ENCODE measurements at regions of chr5 and their contacts with region 1.

Region 1: DNA sequence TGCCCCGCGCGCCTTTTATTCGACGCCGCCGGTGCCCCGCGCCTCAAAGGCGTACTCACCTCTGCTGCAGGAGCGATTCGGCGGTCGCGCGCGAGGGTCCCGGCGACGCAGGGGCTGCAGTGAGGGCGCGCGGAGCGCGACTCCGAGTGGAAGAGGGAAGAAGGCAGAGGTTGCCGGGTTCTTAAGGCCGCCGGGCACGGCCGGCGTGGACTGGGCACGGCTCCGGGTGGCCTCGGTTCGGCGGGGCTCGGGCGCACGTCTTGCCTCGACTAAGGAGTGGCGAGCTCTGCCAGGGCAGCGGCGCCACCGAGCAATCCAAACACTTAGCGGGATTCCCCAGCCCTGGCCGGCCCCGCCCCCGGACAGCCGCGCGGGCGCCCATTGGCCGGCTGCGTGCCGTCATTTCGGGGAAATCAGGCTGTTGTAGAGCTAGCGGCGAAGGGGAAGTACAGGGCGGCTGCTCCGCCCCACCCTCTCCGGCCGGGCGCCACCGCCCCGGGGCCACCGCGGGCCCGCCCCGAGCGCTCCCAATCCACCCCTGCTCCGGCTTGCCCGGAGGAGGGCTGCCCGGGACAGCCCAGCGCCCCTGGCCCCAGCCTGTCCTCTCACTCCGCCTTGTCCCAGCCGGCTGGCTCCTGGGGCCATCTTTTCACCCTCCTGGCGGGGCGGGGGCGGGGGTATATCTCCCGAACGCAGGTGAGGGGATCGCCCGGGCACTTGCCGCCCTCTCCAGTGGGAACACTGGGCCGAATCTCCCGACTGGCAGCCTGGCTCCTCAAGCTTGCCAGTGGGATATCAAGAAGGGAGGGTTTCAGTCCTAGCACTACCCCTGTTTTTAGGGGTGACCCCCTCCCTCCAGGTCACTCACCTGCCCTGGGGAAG is at the start of gene IRF1:
- DNase-seq: peak; percentile 98
- ATAC-seq: peak; percentile 72 to 90 (median 81)
- H3K4me3 ChIP-seq: peak within 1 kb of the TSS; percentile 97
- H3K4me3 Mint-ChIP-seq: peak within 1 kb of the TSS; percentile 96
- H3K27ac ChIP-seq: peak within 1 kb of the TSS; percentile 99
- H3K27ac Mint-ChIP-seq: peak within 1 kb of the TSS; percentile 97 to 100
- H3K4me1 ChIP-seq: peaks cover 72% of the 10 kb centered on the region
- H3K4me1 Mint-ChIP-seq: peaks cover 72 to 81% of the 10 kb centered on the region in 2 donors
- H3K27me3 ChIP-seq: no peaks in the 10 kb centered on the region
- H3K27me3 Mint-ChIP-seq: no peaks in the 10 kb centered on the region
- CTCF ChIP-seq: no peak
- total RNA-seq, gene IRF1: 1,190 to 1,513 (median 1,282) TPM

Region 2: DNA sequence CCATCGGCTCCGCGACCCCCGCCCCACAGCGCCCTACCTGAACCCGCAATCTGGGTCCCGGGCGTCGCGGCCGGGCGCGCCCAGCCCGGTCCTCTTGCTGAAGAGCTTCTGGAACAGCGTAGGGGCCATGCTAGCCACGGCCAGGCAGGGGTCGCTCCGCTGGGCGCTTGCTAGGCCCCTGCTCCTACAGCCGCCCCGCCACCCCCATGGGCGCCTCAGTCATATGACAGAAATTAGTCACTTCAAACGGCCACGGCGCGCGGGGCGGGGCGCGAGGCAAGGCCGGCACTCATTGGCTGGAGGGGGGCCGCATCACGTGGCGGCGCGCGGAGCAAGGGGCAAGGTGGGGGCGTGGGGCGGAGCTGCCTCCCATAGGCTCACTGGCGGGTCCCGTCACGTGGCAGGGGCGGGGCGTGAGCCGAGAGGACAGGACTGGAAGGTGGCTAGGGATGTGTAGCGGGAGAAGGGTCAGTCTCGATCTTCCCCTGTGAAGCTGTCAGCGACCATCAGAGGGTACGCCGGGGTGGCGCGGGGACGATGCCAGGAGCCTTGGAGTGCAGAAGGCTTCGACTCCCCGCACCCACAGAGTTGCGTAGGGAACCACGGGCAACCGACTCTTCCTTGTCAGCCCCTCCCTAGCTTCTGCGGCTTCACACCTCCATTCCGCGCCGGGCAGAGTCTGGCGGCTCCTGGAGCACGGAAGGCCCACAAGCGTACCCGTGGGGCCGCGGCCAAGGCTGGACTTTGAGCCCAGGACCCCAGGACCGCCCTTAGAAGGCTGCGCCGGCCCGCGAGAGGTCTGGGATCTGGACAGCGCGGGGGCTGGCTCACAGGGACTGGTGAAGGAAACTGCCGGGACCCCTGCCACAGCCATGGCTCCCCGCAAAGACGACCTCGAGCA is 693.7 kb before region 1 on chr5 and contains the start of gene FNIP1:
- intact Hi-C with region 1: loop called (anchors 5 kb)
- DNase-seq: peak; percentile 97 to 99
- ATAC-seq: peak; percentile 91 to 99 (median 95)
- H3K4me3 ChIP-seq: peak within 1 kb of the TSS; percentile 72
- H3K4me3 Mint-ChIP-seq: peak within 1 kb of the TSS; percentile 93
- H3K27ac ChIP-seq: peak within 1 kb of the TSS; percentile 91
- H3K27ac Mint-ChIP-seq: peak within 1 kb of the TSS; percentile 86 to 94
- H3K4me1 ChIP-seq: peaks cover 6% of the 10 kb centered on the region
- H3K4me1 Mint-ChIP-seq: peaks cover 24 to 29% of the 10 kb centered on the region in 2 donors
- H3K27me3 ChIP-seq: no peaks in the 10 kb centered on the region
- H3K27me3 Mint-ChIP-seq: no peaks in the 10 kb centered on the region
- CTCF ChIP-seq: no peak
- total RNA-seq, gene FNIP1: 49.6 to 54.6 (median 50.8) TPM

Region 3: GRCh38 chr5:132419502-132420468 is 70.9 kb before region 1 on chr5:
- intact Hi-C with region 1: loop called (anchors 2 kb)
- DNase-seq: peak; percentile 66 to 84
- ATAC-seq: peak; percentile 53 to 79 (median 73)
- H3K4me3 ChIP-seq: no peak overlapping the region
- H3K4me3 Mint-ChIP-seq: peak overlapping the region; percentile 81
- H3K27ac ChIP-seq: peak overlapping the region; percentile 84
- H3K27ac Mint-ChIP-seq: peak overlapping the region; percentile 99 to 100
- H3K4me1 ChIP-seq: peaks cover 85% of the 10 kb centered on the region
- H3K4me1 Mint-ChIP-seq: peaks cover 94 to 95% of the 10 kb centered on the region in 2 donors
- H3K27me3 ChIP-seq: no peaks in the 10 kb centered on the region
- H3K27me3 Mint-ChIP-seq: no peaks in the 10 kb centered on the region
- CTCF ChIP-seq: peak; percentile 91

Region 4: GRCh38 chr5:132426525-132427138 is 64.1 kb before region 1 on chr5:
- intact Hi-C with region 1: loop called (anchors 2 kb)
- DNase-seq: peak; percentile 79
- ATAC-seq: peak; percentile 49 to 76 (median 59)
- H3K4me3 ChIP-seq: peak overlapping the region; percentile 32
- H3K4me3 Mint-ChIP-seq: peak overlapping the region; percentile 79
- H3K27ac ChIP-seq: peak overlapping the region; percentile 95
- H3K27ac Mint-ChIP-seq: peak overlapping the region; percentile 99 to 100
- H3K4me1 ChIP-seq: peaks cover 98% of the 10 kb centered on the region
- H3K4me1 Mint-ChIP-seq: peaks cover 95 to 97% of the 10 kb centered on the region in 2 donors
- H3K27me3 ChIP-seq: no peaks in the 10 kb centered on the region
- H3K27me3 Mint-ChIP-seq: no peaks in the 10 kb centered on the region
- CTCF ChIP-seq: peak; percentile 22

Region 5: DNA sequence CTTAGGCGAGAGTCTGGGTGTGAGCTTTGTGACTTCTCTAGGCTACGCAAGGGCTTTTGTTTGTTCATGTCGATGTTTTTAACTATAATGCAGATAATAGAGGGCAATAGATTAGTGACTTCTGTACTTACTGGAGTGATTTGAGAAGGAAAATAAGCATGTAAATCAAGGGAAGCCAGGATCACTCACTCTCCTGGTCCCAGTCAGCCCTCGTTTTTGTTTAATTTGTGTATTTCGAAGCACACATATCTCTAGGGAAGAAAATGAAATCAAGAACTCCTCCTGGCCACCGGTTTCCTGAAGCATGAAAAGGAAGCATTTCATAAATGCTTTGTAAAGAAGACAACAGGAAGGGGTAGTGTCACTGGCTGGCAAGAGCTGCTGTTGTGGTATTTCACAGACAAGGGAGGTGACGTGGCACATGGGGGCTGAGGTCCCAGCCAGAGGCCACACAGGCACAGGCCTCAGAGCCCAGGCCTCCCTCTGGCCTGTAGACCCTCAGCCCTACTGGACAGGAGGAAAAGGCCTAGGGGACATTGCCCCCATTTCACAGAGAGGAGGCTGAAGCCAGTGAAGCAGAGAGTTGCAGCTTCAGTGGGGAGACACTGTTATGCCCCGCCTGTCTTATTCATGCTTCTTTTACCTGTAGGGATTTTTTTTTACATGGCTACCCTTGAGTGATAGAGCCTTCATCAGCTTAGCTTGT is 34.3 kb before region 1 on chr5:
- intact Hi-C with region 1: loop called (anchors 1 kb)
- DNase-seq: peak; percentile 72 to 86
- ATAC-seq: peak; percentile 57 to 81 (median 71)
- H3K4me3 ChIP-seq: peak overlapping the region; percentile 12
- H3K4me3 Mint-ChIP-seq: peak overlapping the region; percentile 93
- H3K27ac ChIP-seq: peak overlapping the region; percentile 97
- H3K27ac Mint-ChIP-seq: peak overlapping the region; percentile 97 to 100
- H3K4me1 ChIP-seq: peaks cover 80% of the 10 kb centered on the region
- H3K4me1 Mint-ChIP-seq: peaks cover 91 to 94% of the 10 kb centered on the region in 2 donors
- H3K27me3 ChIP-seq: no peaks in the 10 kb centered on the region
- H3K27me3 Mint-ChIP-seq: no peaks in the 10 kb centered on the region
- CTCF ChIP-seq: no peak

Region 6: GRCh38 chr5:132473019-132473531 is 17.7 kb before region 1 on chr5:
- intact Hi-C with region 1: loop called (anchors 2 kb)
- DNase-seq: peak; percentile 90 to 94
- ATAC-seq: peak; percentile 66 to 93 (median 72)
- H3K4me3 ChIP-seq: no peak overlapping the region
- H3K4me3 Mint-ChIP-seq: peak overlapping the region; percentile 78
- H3K27ac ChIP-seq: peak overlapping the region; percentile 85
- H3K27ac Mint-ChIP-seq: peak overlapping the region; percentile 97 to 100
- H3K4me1 ChIP-seq: peaks cover 99% of the 10 kb centered on the region
- H3K4me1 Mint-ChIP-seq: peaks cover 91 to 93% of the 10 kb centered on the region in 2 donors
- H3K27me3 ChIP-seq: no peaks in the 10 kb centered on the region
- H3K27me3 Mint-ChIP-seq: no peaks in the 10 kb centered on the region
- CTCF ChIP-seq: no peak

Region 7: GRCh38 chr5:132556763-132557477 is 66.2 kb after region 1 on chr5 and contains the start of gene RAD50:
- intact Hi-C with region 1: loop called (anchors 2 kb)
- DNase-seq: peak; percentile 94 to 96
- ATAC-seq: peak; percentile 95 to 98 (median 96)
- H3K4me3 ChIP-seq: peak within 1 kb of the TSS; percentile 83
- H3K4me3 Mint-ChIP-seq: peak within 1 kb of the TSS; percentile 96
- H3K27ac ChIP-seq: peak within 1 kb of the TSS; percentile 82
- H3K27ac Mint-ChIP-seq: peak within 1 kb of the TSS; percentile 91 to 97
- H3K4me1 ChIP-seq: peaks cover 16% of the 10 kb centered on the region
- H3K4me1 Mint-ChIP-seq: peaks cover 20 to 25% of the 10 kb centered on the region in 2 donors
- H3K27me3 ChIP-seq: no peaks in the 10 kb centered on the region
- H3K27me3 Mint-ChIP-seq: no peaks in the 10 kb centered on the region
- CTCF ChIP-seq: no peak
- total RNA-seq, gene RAD50: 21.0 to 31.2 (median 27.5) TPM